ENCODE measurements at regions of chr5 and their contacts with region 1.

Region 1: GRCh38 chr5:170809551-170809950 is 26.0 kb downstream of the GABRP start:
- DNase-seq: peak; percentile 48
- H3K4me3 ChIP-seq: no peak overlapping the region
- H3K27ac ChIP-seq: no peak overlapping the region
- H3K4me1 ChIP-seq: no peaks in the 10 kb centered on the region
- H3K27me3 ChIP-seq: no peaks in the 10 kb centered on the region
- CTCF ChIP-seq: peak; percentile 14 to 37
- POLR2A ChIP-seq: no peak

Region 2: DNA sequence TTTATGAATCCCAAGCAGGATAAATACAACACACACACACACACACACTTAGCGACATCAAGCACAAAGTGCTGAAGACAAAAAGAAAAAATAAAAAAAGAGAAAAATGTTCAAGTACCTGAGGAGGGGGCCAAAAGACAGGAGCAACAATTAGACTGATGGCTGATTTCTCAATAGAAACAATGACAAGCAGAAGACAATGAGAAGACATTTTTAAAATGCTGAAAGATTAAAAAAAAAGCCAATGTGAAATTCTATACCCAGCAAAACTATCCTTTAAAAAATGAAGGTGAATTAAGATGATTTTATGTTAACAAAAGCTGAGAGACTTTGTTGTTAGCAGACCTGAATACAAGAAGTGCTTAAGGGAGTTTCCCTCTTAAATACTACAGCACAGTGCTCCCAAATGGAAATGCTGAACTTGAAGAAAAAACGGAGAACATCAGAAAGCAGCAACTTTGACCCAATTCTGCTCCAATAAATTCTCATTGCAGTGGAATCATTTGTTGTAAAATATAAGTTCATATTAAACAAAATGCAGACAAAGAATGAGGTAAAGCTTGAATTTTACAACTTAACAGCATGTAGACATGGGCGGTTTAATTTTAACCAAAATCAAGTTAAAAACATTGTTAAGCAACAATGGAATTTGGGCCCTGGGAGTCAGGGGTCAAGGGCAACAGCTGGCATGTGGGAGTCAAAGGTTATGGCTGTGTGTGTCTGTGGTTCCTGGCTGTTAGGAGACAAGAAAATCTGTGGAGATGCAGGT is 51.5 kb after region 1 on chr5:
- CTCF ChIA-PET with region 1: no interaction called
- POLR2A ChIA-PET with region 1: no interaction called
- dilution Hi-C with region 1: no loop called
- intact Hi-C with region 1: no loop called
- DNase-seq: peak; percentile 21
- H3K4me3 ChIP-seq: no peak overlapping the region
- H3K27ac ChIP-seq: no peak overlapping the region
- H3K4me1 ChIP-seq: peaks cover 5% of the 10 kb centered on the region
- H3K27me3 ChIP-seq: no peaks in the 10 kb centered on the region
- CTCF ChIP-seq: no peak
- POLR2A ChIP-seq: no peak

Region 3: GRCh38 chr5:170917113-170917512 is 107.6 kb after region 1 on chr5:
- CTCF ChIA-PET with region 1: interaction called, 9 read pairs
- POLR2A ChIA-PET with region 1: no interaction called
- dilution Hi-C with region 1: no loop called
- intact Hi-C with region 1: loop called (anchors 5 kb)
- DNase-seq: peak; percentile 6
- H3K4me3 ChIP-seq: no peak overlapping the region
- H3K27ac ChIP-seq: no peak overlapping the region
- H3K4me1 ChIP-seq: no peaks in the 10 kb centered on the region
- H3K27me3 ChIP-seq: no peaks in the 10 kb centered on the region
- CTCF ChIP-seq: no peak
- POLR2A ChIP-seq: no peak

Region 4: DNA sequence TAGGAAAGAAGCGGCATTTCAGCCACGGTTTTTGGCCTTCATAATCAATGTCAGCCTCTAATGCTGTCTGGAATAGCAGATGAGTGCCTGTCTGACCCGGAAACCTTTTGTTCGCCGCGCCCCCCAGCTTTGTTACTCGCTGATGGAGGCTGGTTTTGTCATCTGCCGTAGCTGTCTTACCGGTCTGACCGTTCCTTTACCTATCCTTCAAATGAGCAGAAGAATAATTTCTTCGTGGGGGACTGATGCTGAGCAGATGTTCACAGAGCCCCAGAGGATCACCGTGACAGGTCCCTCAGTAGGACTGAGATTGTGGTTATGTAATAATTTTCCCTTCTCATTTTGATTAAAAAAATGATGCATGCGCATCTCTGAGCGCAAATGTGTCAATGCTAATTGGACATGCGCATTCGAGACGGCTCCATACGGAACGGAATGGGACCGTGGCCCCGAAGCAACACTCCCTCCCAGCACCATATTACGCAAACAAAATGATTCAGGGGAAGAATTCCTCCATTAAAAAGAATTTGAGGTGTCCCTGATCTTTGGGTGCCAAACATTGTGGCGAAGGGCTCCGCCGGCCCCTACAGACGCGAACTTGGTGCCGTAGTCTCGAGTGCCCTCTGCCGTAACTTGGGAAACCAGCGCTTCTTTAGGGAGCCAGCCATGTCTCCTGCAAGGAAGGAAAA is 527.1 kb after region 1 on chr5:
- CTCF ChIA-PET with region 1: interaction called, 31 read pairs
- POLR2A ChIA-PET with region 1: no interaction called
- dilution Hi-C with region 1: no loop called
- intact Hi-C with region 1: loop called (anchors 1 kb)
- DNase-seq: peak; percentile 73
- H3K4me3 ChIP-seq: peak overlapping the region; percentile 35 to 66 (median 60)
- H3K27ac ChIP-seq: no peak overlapping the region
- H3K4me1 ChIP-seq: peaks cover 7% of the 10 kb centered on the region
- H3K27me3 ChIP-seq: peaks cover 8 to 11% of the 10 kb centered on the region in 2 experiments
- CTCF ChIP-seq: peak; percentile 58 to 83
- POLR2A ChIP-seq: no peak

Region 5: GRCh38 chr5:171342362-171343111 is 533.0 kb after region 1 on chr5:
- CTCF ChIA-PET with region 1: interaction called, 31 read pairs
- POLR2A ChIA-PET with region 1: no interaction called
- dilution Hi-C with region 1: no loop called
- intact Hi-C with region 1: loop called (anchors 1 kb)
- DNase-seq: peak; percentile 64
- H3K4me3 ChIP-seq: no peak overlapping the region
- H3K27ac ChIP-seq: no peak overlapping the region
- H3K4me1 ChIP-seq: no peaks in the 10 kb centered on the region
- H3K27me3 ChIP-seq: no peaks in the 10 kb centered on the region
- CTCF ChIP-seq: peak; percentile 57 to 61
- POLR2A ChIP-seq: no peak